HEK293 (cell line): ENCODE measurements at regions of chr9 and their contacts with region 1.

Region 1: DNA sequence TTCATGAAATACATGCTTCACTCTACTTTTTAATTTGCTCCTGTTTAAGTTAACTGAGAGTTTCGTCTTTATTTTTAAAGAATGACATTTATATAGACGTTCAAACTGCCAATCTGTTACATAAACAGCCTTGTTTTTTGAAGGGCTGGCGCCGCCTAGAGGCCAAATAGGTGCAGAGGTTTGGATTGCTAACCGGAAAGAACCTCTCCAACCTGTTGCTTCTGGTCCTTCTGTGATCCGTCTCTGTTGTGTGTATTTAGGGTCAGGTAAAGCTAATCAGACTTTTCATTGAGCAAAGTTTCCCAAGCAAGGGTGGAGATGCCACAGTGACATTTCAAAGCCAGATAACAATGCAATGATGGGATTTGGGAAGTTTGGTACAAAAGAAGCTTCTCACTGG is 39.5 kb upstream of the GLIS3 start:
- H3K4me3 ChIP-seq: no peak overlapping the region
- H3K27ac ChIP-seq: no peak overlapping the region
- H3K4me1 ChIP-seq: no peaks in the 10 kb centered on the region
- CTCF ChIP-seq: no peak

Region 2: DNA sequence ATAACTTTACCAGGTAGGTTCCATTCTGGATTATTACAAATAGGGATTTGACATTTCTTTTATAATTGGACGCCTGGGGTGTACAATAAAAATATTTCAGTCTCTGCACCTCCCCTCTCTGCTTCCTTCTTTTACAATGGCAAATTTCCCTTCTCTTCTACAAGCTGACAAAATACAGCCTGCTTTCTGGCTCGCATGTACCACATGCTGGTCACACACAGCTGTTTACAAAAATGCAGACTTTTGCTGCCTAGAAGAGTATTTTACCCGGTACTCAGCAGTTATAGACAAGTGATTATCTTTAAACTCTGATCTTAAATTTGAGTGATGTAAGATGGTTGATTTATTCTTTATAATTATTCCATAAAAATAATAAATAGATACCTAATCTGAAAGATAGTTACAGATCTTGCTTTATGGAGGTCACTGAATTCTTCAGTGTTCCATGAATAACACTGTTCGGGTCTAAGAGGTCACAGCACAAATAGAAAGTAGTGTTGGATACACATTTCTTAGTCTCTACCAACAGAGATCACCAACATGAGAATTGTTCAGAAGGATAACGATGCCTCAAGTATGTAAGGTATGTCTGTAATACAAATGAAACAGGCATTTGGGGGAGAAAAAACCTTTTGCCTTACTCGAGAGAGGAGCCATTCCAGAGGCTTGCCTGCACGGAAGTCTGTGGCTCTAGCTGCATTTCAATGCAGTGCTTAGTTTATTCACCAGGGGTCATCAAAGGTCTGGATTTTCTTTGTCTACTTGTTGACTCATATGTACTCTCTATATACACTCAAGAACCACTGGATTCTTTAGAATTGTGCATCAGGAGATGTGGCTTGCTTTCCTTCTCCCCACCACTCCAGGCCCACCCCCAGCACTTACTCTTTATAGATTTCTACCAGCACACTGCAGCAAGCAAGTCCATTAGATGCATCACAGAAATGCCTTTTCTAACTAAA is 607.0 kb before region 1 on chr9:
- CTCF ChIA-PET with region 1: interaction called, 23 read pairs
- POLR2A ChIA-PET with region 1: no interaction called
- H3K4me3 ChIP-seq: no peak overlapping the region
- H3K27ac ChIP-seq: no peak overlapping the region
- H3K4me1 ChIP-seq: no peaks in the 10 kb centered on the region
- CTCF ChIP-seq: peak; percentile 28; the same call in 1 of the 2 replicates

Region 3: DNA sequence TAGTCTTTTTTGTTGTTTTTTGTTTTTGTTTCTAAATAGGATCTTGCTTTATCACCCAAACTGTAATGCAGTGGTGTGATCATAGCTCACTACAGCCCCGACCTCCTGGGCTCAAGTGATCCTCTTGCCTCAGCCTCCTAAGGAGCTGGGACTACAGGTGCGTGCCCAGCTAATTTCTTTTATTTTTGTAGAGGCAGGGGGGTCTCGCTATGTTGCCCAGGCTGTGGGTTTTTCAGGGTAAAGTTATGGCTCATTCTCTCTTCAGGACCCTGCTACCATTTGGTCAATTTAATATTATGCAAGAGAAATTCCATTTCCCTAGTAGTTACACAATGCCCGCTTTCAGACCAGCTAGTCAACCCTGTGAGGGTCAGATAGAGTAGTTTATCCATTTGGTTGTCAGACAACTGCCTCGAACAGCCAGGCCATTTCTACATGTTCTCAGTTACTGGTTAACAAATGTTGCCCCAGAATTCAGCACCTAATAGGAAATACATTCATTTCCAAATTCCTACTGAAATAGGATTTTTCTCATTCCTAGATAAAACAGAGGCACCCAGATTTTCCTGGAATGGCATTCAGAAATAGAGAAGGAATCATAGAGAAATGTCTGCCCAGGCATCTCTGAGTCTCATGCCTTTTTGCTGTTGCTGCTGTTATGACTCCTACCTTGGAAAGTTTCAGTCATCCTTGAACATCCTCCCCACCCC is 33.1 kb before region 1 on chr9:
- CTCF ChIA-PET with region 1: interaction called, 23 read pairs
- POLR2A ChIA-PET with region 1: no interaction called
- H3K4me3 ChIP-seq: no peak overlapping the region
- H3K27ac ChIP-seq: no peak overlapping the region
- H3K4me1 ChIP-seq: no peaks in the 10 kb centered on the region; the same call in 1 of the 2 replicates
- CTCF ChIP-seq: no peak

Region 4: DNA sequence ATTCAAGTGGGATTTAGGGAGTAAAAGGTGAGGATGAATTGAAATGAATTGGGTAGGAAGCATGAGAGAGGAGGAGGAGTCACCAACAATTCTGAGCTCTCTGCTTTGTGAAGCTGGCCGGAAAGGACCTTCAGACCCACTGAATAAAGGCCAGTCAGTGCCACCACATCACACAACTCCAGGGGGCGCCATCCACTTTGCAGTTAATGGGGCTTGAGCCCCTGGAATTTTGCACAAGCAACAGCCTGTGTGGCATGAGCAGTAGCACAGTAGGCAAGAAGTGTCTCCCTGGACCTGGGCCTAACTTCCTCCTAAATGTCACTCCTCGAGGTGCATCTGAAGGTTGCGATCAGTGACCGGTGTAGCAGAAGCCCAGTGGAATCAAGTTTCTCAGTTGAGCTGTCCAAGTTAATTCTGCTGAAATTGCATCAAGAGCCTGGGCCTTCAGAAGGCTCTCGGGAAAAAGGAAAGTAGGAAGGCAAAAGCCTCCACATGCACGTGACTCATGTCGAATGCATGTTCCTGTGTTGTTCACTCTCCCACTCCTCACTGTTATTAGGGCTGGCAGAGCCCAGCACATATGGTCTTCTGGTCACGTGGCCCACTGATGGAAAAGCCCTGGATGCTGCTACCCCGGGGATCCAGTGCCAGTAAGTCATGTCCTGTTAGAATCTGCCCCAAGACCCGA is 11.7 kb before region 1 on chr9:
- CTCF ChIA-PET with region 1: interaction called, 38 read pairs
- POLR2A ChIA-PET with region 1: interaction called, 5 read pairs
- H3K4me3 ChIP-seq: no peak overlapping the region
- H3K27ac ChIP-seq: no peak overlapping the region
- H3K4me1 ChIP-seq: no peaks in the 10 kb centered on the region
- CTCF ChIP-seq: no peak

Region 5: DNA sequence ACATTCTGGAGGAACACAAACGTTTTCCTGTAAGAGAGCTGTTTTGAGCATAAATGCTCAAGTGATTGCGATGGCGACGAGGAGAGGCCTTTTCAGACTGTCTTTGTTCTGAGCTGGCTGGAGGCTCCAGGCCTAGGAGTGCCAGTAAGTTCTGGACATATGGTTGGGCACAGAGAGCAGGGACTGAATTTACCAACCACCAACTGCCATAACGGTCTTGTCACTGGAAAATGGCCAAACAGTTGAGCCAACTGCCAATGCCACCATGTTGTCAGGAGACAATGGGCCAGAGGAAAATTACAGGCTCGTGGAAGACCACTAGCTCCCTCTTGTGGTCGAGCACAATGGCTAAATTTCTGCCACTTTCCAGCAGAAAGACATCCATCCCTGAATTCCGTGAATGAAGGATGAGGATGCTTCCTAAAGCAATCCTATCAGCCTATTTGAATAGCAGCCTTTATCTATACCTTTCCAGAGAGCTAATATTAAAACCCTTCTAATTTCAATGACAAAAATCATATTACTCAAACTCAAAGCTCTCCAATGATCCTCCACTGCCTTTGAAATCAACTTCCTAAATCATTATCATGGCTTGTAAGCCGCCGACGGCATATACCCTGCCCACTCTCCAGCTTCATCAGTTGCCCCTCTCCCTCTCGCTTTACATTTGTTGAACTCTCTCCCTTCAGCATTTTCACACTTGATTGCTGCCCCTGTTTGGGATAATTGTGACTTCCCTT is 27.4 kb after region 1 on chr9:
- CTCF ChIA-PET with region 1: interaction called, 38 read pairs
- POLR2A ChIA-PET with region 1: no interaction called
- H3K4me3 ChIP-seq: no peak overlapping the region
- H3K27ac ChIP-seq: no peak overlapping the region
- H3K4me1 ChIP-seq: no peaks in the 10 kb centered on the region
- CTCF ChIP-seq: 0 out of 2 replicates have a peak, but pooled peaks have one; percentile 40